CD4-positive, alpha-beta T cell (primary cell): ENCODE measurements at regions of chr12 and their contacts with region 1.

Region 1: DNA sequence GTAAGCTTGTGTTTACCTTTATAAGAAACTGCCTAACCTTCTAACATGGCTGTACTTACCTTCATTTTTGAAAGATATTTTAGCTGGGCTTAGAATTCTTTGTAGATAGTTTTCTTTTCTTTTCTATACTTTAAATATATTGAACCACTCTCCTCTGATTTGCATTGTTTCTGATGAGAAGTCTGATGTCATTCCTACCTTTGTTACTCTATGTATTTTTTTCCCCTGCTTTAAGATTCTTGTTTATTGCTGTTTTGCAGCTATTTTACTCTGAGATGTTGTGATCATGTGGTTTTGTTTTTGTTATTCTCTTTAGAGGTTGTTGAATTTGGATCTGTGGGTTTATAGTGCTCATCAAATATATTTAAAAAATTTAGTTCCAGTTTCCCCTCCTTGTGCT is 31.8 kb downstream of the CNOT2 start:
- DNase-seq: no peak
- ATAC-seq: no peak
- H3K4me3 ChIP-seq: no peak overlapping the region
- H3K4me3 Mint-ChIP-seq: no peak overlapping the region
- H3K27ac ChIP-seq: no peak overlapping the region
- H3K27ac Mint-ChIP-seq: peak overlapping the region; percentile 20
- H3K4me1 ChIP-seq: peaks cover 4% of the 10 kb centered on the region
- H3K4me1 Mint-ChIP-seq: peaks cover 89% of the 10 kb centered on the region
- H3K27me3 ChIP-seq: no peaks in the 10 kb centered on the region
- H3K27me3 Mint-ChIP-seq: no peaks in the 10 kb centered on the region
- CTCF ChIP-seq: no peak

Region 2: GRCh38 chr12:70260646-70261045 is 14.4 kb before region 1 on chr12:
- CTCF ChIA-PET with region 1: no interaction called
- POLR2A ChIA-PET with region 1: no interaction called
- intact Hi-C with region 1: loop called in 1 of 2 experiments (anchors 2 kb)
- DNase-seq: no peak
- ATAC-seq: no peak
- H3K4me3 ChIP-seq: no peak overlapping the region
- H3K4me3 Mint-ChIP-seq: no peak overlapping the region
- H3K27ac ChIP-seq: no peak overlapping the region
- H3K27ac Mint-ChIP-seq: peak overlapping the region; percentile 58
- H3K4me1 ChIP-seq: peaks cover 9% of the 10 kb centered on the region
- H3K4me1 Mint-ChIP-seq: peaks cover 83% of the 10 kb centered on the region
- H3K27me3 ChIP-seq: no peaks in the 10 kb centered on the region
- H3K27me3 Mint-ChIP-seq: no peaks in the 10 kb centered on the region
- CTCF ChIP-seq: no peak

Region 3: DNA sequence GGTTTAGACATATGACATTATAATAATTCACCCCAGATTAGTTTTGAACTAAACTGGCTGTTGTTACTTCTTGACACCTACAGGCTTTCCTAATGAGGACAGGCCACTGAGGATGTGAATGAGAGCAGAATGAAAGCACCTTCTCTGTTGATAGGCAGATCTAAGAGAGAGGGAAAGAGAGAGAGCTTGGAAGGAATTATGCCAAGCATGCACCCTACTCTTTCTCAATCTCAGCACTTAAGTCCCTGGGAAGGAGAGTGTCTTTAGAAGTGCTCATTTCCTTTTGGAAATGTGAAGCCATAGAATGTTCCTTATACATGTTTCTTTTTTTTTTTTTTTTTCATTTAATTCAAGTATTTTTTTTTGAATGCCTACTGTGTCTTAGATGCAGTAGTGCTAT is 1613.5 kb after region 1 on chr12:
- CTCF ChIA-PET with region 1: no interaction called
- POLR2A ChIA-PET with region 1: no interaction called
- intact Hi-C with region 1: no loop called
- DNase-seq: no peak
- ATAC-seq: no peak
- H3K4me3 ChIP-seq: no peak overlapping the region
- H3K4me3 Mint-ChIP-seq: no peak overlapping the region
- H3K27ac ChIP-seq: no peak overlapping the region
- H3K27ac Mint-ChIP-seq: no peak overlapping the region
- H3K4me1 ChIP-seq: no peaks in the 10 kb centered on the region
- H3K4me1 Mint-ChIP-seq: peaks cover 44% of the 10 kb centered on the region
- H3K27me3 ChIP-seq: no peaks in the 10 kb centered on the region
- H3K27me3 Mint-ChIP-seq: no peaks in the 10 kb centered on the region
- CTCF ChIP-seq: no peak